A673 (cell line): ENCODE measurements at regions of chr7 and their contacts with region 1.

Region 1: GRCh38 chr7:33109005-33109757 is at the start of gene RP9:
- DNase-seq: peak; percentile 89
- H3K4me3 ChIP-seq: peak within 1 kb of the TSS; percentile 95
- H3K27ac ChIP-seq: peak within 1 kb of the TSS; percentile 86
- H3K4me1 ChIP-seq: peaks cover 8% of the 10 kb centered on the region
- H3K27me3 ChIP-seq: no peaks in the 10 kb centered on the region
- CTCF ChIP-seq: peak; percentile 60
- total RNA-seq, gene RP9: 29.3 and 29.5 TPM in 2 replicates

Region 2: GRCh38 chr7:32761451-32762205 is 347.6 kb before region 1 on chr7:
- CTCF ChIA-PET with region 1: no interaction called
- POLR2A ChIA-PET with region 1: no interaction called
- intact Hi-C with region 1: loop called (anchors 5 kb)
- DNase-seq: no peak
- H3K4me3 ChIP-seq: no peak overlapping the region
- H3K27ac ChIP-seq: no peak overlapping the region
- H3K4me1 ChIP-seq: no peaks in the 10 kb centered on the region
- H3K27me3 ChIP-seq: no peaks in the 10 kb centered on the region
- CTCF ChIP-seq: no peak